ENCODE measurements at regions of chr4 and their contacts with region 1.

Region 1: DNA sequence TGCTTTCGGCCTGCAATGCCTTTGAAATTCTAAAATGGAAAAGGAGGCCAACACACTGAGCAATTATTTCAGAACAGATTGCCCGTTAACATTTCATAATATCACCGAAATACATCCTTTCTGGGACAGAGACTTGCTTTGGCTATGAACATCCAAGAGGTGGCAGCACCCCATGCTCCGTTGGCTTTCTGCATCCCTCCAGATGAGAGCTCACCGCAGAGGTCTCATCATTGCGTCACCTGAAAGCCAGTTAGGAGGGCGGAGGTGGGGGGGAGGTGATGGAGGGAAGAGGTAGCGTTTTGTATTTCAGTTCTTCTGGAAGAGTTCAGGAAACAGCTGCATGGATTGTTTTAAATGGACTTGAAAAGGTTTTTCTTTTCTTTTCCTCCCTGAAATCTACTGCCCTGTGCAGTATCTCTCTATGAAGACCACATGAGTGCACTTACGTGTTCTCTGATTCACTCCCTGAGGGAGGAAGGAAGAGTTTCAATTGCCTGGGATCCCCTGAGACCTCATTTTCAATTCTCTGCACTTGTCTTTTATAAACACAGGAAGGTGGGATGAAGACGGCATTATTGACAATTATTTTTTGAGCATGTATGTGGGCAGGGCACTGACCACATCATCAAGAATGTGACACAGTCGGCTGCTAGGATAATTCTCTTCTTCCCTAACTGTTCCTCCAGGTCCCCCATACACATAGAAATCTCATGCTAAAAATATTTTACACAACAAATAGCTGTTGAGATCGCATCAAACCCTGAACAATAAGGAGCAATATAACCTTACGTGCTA is 166.9 kb upstream of the PGRMC2 start:
- DNase-seq: peak; percentile 87
- ATAC-seq: peak; percentile 94
- H3K4me3 ChIP-seq: peak overlapping the region; percentile 30; the same call in 1 of the 2 replicates
- H3K27ac ChIP-seq: peak overlapping the region; percentile 12; the same call in 1 of the 2 replicates
- H3K4me1 ChIP-seq: peaks cover 7% of the 10 kb centered on the region
- H3K27me3 ChIP-seq: no peaks in the 10 kb centered on the region
- CTCF ChIP-seq: peak; percentile 82

Region 2: DNA sequence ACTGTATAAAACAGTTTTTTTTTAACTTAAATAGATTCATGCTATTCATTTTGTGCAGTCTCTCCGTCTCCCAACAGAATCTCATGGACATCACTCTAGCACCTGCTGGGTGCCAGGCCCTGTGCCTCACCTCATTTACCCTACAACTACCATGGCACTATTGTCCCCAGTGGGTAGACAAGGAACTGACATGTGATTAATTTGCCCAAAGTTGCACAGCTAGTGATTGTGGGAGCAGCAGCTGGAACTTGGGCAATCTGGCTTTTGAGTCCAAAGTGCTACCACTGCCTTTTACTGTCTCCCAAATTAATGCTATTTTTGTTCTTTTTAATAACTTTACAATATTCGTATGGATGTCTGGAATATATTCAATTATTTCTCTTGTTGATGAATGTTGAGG is 155.6 kb before region 1 on chr4:
- CTCF ChIA-PET with region 1: no interaction called
- POLR2A ChIA-PET with region 1: no interaction called
- intact Hi-C with region 1: no loop called
- DNase-seq: no peak
- ATAC-seq: no peak
- H3K4me3 ChIP-seq: no peak overlapping the region
- H3K27ac ChIP-seq: no peak overlapping the region
- H3K4me1 ChIP-seq: no peaks in the 10 kb centered on the region
- H3K27me3 ChIP-seq: no peaks in the 10 kb centered on the region
- CTCF ChIP-seq: no peak

Region 3: DNA sequence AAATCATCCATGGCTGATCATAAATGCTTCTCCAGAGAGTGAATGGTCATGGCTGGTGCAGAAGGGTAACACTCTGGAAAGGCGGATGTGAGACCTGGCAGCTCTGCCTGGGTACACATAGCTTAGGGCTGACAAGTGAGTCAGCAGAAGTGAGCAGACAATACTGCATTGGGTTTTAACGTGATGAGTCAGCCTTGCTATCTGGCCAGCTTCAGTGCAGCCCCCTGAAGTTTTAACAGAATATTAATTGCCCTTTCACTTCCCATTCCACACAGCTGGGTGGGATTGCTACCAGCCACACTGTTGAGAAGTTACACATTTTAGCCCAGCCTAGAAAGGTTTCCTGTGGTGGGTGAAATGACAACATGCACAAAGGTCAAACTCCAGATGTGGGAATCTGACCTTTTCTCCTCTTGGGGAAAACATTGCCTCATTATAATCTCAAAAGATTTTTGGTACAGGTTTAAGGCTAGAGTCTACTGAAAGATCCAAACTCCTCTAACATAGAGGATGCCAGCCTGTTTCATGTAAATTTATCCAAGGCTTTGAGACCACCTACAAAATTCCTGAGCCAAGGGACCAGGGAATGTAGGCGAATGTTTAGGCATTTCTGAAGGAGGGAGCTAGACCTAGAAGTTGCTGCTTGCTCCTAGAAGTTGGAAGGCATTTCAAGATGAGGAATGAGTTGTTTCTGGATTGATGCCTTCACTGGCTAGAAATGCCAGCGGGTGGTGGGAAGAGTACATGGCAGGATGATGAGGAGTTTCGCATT is 63.4 kb after region 1 on chr4:
- CTCF ChIA-PET with region 1: interaction called, 4 read pairs
- POLR2A ChIA-PET with region 1: no interaction called
- intact Hi-C with region 1: loop called (anchors 2 kb)
- DNase-seq: peak; percentile 87
- ATAC-seq: peak; percentile 99
- H3K4me3 ChIP-seq: no peak overlapping the region
- H3K27ac ChIP-seq: peak overlapping the region; percentile 79
- H3K4me1 ChIP-seq: peaks cover 32% of the 10 kb centered on the region
- H3K27me3 ChIP-seq: no peaks in the 10 kb centered on the region
- CTCF ChIP-seq: no peak

Region 4: GRCh38 chr4:128528793-128529553 is 74.5 kb after region 1 on chr4:
- CTCF ChIA-PET with region 1: interaction called, 4 read pairs
- POLR2A ChIA-PET with region 1: no interaction called
- intact Hi-C with region 1: loop called (anchors 2 kb)
- DNase-seq: peak; percentile 88
- ATAC-seq: peak; percentile 82
- H3K4me3 ChIP-seq: peak overlapping the region; percentile 33; the same call in 1 of the 2 replicates
- H3K27ac ChIP-seq: peak overlapping the region; percentile 19
- H3K4me1 ChIP-seq: peaks cover 49% of the 10 kb centered on the region
- H3K27me3 ChIP-seq: no peaks in the 10 kb centered on the region
- CTCF ChIP-seq: no peak

Region 5: DNA sequence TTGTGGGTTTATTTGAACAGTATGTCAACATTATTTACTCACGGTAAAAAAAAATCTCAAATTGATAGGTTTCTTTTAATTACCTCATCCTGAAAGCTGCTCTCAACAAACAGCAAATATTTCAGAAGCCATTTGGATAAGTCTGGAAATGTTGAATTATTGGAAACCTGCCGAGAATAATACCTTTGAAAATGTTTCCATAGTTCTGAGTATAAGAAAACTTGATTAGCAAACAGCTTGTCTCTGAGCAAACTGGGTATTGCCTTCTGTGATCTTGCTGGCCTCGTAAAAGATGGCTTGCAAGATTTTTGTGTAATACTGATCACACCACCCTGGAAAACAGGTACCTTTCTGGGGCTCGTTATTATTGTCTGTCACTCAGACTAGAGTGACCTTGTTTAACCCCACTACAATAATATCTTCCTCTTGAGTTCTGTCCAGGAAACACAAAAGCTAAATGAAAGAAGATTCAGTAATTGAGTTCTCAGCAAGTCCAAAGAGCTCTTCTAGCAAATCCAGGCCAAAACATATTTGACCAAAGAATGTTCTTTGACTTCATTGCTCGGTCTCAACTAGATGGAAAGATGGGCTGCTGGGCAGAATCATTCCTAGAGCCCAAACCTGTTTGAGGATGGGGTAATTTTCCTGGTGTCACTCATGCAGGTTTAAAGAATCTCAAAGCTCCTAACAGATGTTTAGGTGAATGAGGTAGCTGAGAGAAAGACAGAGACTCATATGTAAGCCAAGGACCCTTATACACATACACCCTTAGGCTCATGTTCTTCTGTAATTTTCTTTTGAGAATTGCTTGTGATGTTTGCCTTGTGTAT is 99.4 kb after region 1 on chr4:
- CTCF ChIA-PET with region 1: interaction called, 6 read pairs
- POLR2A ChIA-PET with region 1: no interaction called
- intact Hi-C with region 1: loop called (anchors 1 kb)
- DNase-seq: peak; percentile 13
- ATAC-seq: peak; percentile 31; the same call in 1 of the 2 replicates
- H3K4me3 ChIP-seq: peak overlapping the region; percentile 76
- H3K27ac ChIP-seq: peak overlapping the region; percentile 34; the same call in 1 of the 2 replicates
- H3K4me1 ChIP-seq: peaks cover 14% of the 10 kb centered on the region
- H3K27me3 ChIP-seq: no peaks in the 10 kb centered on the region
- CTCF ChIP-seq: no peak

Region 6: GRCh38 chr4:128565565-128566186 is 111.2 kb after region 1 on chr4:
- CTCF ChIA-PET with region 1: no interaction called
- POLR2A ChIA-PET with region 1: no interaction called
- intact Hi-C with region 1: loop called (anchors 5 kb)
- DNase-seq: peak; percentile 46
- ATAC-seq: peak; percentile 71
- H3K4me3 ChIP-seq: no peak overlapping the region
- H3K27ac ChIP-seq: no peak overlapping the region
- H3K4me1 ChIP-seq: peaks cover 12% of the 10 kb centered on the region
- H3K27me3 ChIP-seq: no peaks in the 10 kb centered on the region
- CTCF ChIP-seq: peak; percentile 72

Region 7: GRCh38 chr4:128649575-128650205 is 195.2 kb after region 1 on chr4:
- CTCF ChIA-PET with region 1: no interaction called
- POLR2A ChIA-PET with region 1: no interaction called
- intact Hi-C with region 1: loop called (anchors 2 kb)
- DNase-seq: no peak
- ATAC-seq: no peak
- H3K4me3 ChIP-seq: no peak overlapping the region
- H3K27ac ChIP-seq: no peak overlapping the region
- H3K4me1 ChIP-seq: no peaks in the 10 kb centered on the region
- H3K27me3 ChIP-seq: no peaks in the 10 kb centered on the region
- CTCF ChIP-seq: no peak

Region 8: GRCh38 chr4:128809477-128810330 is 355.2 kb after region 1 on chr4 and contains the start of gene JADE1:
- CTCF ChIA-PET with region 1: interaction called, 5 read pairs
- POLR2A ChIA-PET with region 1: no interaction called
- intact Hi-C with region 1: loop called (anchors 1 kb)
- DNase-seq: peak; percentile 85
- ATAC-seq: peak; percentile 62
- H3K4me3 ChIP-seq: peak within 1 kb of the TSS; percentile 82
- H3K27ac ChIP-seq: peak within 1 kb of the TSS; percentile 64
- H3K4me1 ChIP-seq: peaks cover 5% of the 10 kb centered on the region; the same call in 1 of the 2 replicates
- H3K27me3 ChIP-seq: no peaks in the 10 kb centered on the region
- CTCF ChIP-seq: peak; percentile 55
- total RNA-seq, gene JADE1: 10.8 and 10.9 TPM in 2 replicates

Measured in PC-3 (cell line).